ENCODE measurements at regions of chr3 and their contacts with region 1.

Region 1: GRCh38 chr3:150727653-150728502 is 24.2 kb upstream of the ERICH6 start:
- DNase-seq: peak in 2 of 5 donors; percentile 41 to 46
- ATAC-seq: peak; percentile 60 to 88 (median 82)
- H3K4me3 ChIP-seq: no peak overlapping the region
- H3K27ac ChIP-seq: peak overlapping the region in 5 of 12 donors; percentile 13 to 66 (median 30)
- H3K4me1 ChIP-seq: peaks cover 0 to 19% (median 3%) of the 10 kb centered on the region in 12 donors
- H3K27me3 ChIP-seq: no peaks in the 10 kb centered on the region
- CTCF ChIP-seq: no peak
- POLR2A ChIP-seq: peak in 1 of 2 donors; percentile 33

Region 2: DNA sequence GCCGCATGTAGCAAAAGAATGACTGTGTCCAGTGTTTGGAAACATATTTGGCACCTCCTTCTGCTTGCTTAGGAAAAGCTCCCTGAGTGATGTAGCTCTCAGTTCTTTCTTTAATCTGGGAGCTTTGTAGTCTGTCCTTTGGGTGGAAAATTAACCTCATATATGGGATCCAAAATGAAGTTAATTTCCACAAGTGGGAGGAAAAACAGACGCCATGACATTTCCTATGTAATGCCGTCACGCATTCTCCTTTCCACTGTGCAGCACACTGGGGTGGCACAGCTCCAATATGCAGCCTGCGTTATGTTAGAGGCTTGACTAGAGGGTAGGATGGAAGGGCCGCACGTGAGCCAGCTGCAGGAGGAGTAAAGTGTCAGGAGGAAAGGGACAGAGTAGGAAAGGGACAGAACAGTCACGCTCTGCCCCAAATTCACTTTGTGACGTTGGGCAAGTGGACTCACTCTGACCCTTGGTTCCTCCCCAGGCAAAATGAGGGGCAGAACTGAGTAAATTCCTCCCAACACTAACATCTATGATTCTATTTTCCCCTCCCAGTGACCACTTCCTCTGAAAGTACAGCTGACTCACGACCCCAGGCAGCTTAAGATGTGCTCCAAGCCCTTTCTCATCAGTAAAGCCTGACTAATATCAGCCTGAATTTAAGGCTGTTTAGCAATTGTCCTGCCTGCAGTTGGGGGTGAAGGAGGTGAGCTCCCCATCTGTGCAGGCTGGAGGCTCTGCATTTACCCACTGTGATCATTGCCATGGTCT is 580.7 kb before region 1 on chr3:
- intact Hi-C with region 1: no loop called
- DNase-seq: peak in 1 of 5 donors; percentile 34
- ATAC-seq: peak in 3 of 4 donors; percentile 19 to 54 (median 37)
- H3K4me3 ChIP-seq: no peak overlapping the region
- H3K27ac ChIP-seq: peak overlapping the region in 2 of 12 donors; percentile 55 to 68
- H3K4me1 ChIP-seq: peaks cover 0 to 17% (median 2%) of the 10 kb centered on the region in 12 donors
- H3K27me3 ChIP-seq: no peaks in the 10 kb centered on the region
- CTCF ChIP-seq: no peak
- POLR2A ChIP-seq: no peak

Region 3: GRCh38 chr3:150763122-150763841 is 35.4 kb after region 1 on chr3 and contains the start of gene SIAH2:
- intact Hi-C with region 1: loop called in 8 of 10 experiments (anchors 2 to 5 kb)
- DNase-seq: peak; percentile 93 to 96 (median 95)
- ATAC-seq: peak; percentile 89 to 95 (median 92)
- H3K4me3 ChIP-seq: peak within 1 kb of the TSS; percentile 48 to 93 (median 83)
- H3K27ac ChIP-seq: peak within 1 kb of the TSS; percentile 87 to 99 (median 96)
- H3K4me1 ChIP-seq: peaks cover 5 to 42% (median 29%) of the 10 kb centered on the region in 12 donors
- H3K27me3 ChIP-seq: no peaks in the 10 kb centered on the region
- CTCF ChIP-seq: peak in 1 of 12 donors; percentile 9
- POLR2A ChIP-seq: peak in 1 of 2 donors; percentile 89
- total RNA-seq, gene SIAH2: 16.9 to 38.7 (median 23.4) TPM